Left colon (tissue), 2 donors: ENCODE measurements at regions of chr5 and their contacts with region 1.

Region 1: DNA sequence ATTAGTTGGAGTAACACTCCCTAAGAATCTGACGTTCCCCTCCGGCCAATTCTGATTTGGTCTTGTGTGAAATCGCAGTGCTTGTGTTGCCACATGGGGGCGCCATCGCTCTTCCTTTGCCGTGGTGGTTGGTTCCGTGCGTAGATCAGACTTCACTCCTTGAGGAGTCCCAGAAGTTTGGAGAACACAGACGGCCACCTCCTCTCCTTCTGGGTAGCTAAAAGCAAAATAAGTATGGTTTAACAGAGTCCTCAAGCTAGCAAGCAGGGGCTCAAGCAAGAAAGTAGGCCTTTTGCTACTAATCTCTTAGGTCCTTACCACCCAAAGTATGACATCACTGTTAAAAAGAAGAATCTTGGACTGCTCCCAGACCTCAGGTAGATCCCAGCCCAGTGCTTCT is 59.5 kb downstream of the HSPA4 start:
- DNase-seq: peak; percentile 66 to 89
- ATAC-seq: peak; percentile 85

Region 2: GRCh38 chr5:133164759-133165158 is 53.5 kb after region 1 on chr5:
- intact Hi-C with region 1: no loop called
- DNase-seq: no peak
- ATAC-seq: no peak

Region 3: DNA sequence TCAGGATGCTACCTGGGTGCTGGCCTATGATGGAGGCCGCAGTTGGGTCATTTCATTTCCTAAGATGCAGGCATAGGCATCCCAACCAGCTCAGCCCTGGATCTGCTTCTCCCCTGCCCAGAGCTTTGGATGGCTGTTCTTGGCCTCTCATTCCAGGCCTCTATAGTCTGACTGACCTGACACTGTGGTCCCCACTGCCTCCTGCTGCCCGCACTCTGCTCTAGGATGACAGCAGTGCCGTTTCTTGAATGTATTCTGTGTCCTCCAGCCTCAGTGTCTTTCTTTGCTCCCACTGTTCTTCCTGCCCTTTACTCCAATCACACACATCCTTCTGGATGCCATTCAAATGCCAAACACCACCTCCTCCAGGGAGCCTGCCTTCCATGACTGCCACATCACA is 176.2 kb after region 1 on chr5:
- intact Hi-C with region 1: loop called in 1 of 2 experiments (anchors 5 kb)
- DNase-seq: peak in 1 of 2 donors; percentile 60
- ATAC-seq: peak; percentile 62

Region 4: GRCh38 chr5:133456882-133457402 is 345.6 kb after region 1 on chr5:
- intact Hi-C with region 1: loop called in 1 of 2 experiments (anchors 10 kb)
- DNase-seq: no peak
- ATAC-seq: no peak